Activated naive CD4-positive, alpha-beta T cell treated with anti-CD3 and anti-CD28 coated beads for 36 hours (primary cell): ENCODE measurements at regions of chr2 and their contacts with region 1.

Region 1: DNA sequence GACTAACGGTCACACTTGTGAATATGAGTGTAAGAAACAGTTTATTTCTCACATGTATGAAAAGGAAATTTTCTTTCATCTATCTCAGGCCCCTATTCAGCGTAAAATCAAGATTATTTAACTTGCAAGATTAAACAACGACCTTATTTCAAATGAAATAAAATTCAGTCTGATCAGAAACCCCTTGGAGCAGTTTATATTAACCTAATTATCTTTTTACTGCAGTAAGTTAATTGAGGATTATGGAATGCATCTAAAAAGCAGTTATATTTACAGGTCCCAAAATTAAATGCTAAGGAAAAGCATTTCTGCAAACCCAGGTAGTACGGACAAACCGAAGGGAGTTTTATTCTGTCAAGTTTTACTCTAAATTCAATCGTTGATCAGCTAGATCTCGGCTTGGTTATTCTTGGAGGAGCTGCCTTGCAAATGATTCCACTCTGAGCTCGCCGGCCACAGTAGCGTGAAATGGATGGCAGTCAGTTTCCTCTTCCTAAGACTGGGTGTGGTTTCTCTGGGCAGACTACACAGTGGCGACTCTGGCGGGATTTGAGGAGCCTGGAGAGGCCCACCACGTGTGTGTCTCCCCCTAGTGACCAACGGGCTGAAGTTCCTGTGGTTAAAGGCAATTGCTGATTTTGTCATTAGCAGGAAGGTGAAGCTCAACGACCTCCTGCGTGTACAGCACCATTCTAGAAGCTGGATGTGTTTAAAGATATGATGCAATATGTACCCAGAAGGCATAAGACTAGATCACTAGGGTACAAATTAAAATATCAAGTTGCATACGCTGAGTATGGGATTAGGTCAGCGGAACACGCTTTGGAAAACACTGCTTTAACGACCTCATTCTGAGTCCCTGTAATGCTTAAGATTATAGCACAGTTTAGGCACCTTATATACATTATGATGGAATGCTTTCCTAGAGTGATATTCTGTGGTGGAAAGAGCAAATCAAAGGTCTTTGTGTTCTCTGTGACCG is 36.4 kb downstream of the PRKRA start:
- DNase-seq: peak; percentile 93
- H3K4me3 Mint-ChIP-seq: peak overlapping the region; percentile 79
- H3K27ac Mint-ChIP-seq: peak overlapping the region; percentile 90
- H3K4me1 Mint-ChIP-seq: peaks cover 12% of the 10 kb centered on the region
- H3K27me3 Mint-ChIP-seq: no peaks in the 10 kb centered on the region

Region 2: DNA sequence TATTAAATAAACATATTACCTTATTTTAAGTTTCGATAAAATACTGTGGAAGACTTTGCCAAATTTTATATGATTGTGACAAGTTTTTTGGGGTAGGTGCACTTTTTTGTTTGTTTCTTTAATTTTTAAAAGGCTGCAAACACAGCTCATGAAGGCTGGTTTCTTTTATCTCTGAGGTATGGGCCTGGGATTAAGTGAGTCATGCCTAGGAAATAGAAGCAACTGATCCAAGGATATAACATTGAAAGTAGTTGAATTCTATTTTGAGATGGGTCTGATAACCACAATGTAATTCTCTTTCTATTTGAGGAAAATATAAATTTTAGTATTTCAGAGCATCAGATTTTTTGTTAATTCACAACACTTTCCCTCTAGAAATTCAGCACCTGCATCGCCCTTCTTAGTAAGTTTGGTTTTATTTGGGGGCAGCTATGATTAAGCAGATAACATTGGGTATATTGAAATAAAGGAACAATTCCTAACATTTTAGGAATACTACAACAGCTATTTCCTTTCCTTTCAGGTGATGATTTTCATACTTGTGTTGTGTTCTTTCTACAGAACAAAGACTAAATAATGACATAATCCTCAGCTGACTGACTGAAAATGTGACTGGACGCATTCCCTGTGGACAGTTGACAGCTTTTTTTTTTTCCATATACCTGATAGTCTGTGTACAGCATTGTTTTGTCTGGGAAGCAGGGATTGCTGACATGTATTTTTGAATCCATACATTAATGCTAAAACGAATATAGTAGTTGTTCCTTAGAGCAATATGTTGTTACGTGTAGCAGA is 285.5 kb before region 1 on chr2:
- CTCF ChIA-PET with region 1: interaction called, 10 read pairs
- intact Hi-C with region 1: loop called (anchors 1 kb)
- DNase-seq: no peak
- H3K4me3 Mint-ChIP-seq: no peak overlapping the region
- H3K27ac Mint-ChIP-seq: no peak overlapping the region
- H3K4me1 Mint-ChIP-seq: no peaks in the 10 kb centered on the region
- H3K27me3 Mint-ChIP-seq: no peaks in the 10 kb centered on the region

Region 3: GRCh38 chr2:178188466-178188865 is 226.1 kb before region 1 on chr2:
- CTCF ChIA-PET with region 1: no interaction called
- intact Hi-C with region 1: no loop called
- DNase-seq: no peak
- H3K4me3 Mint-ChIP-seq: no peak overlapping the region
- H3K27ac Mint-ChIP-seq: no peak overlapping the region
- H3K4me1 Mint-ChIP-seq: no peaks in the 10 kb centered on the region
- H3K27me3 Mint-ChIP-seq: peaks cover 22% of the 10 kb centered on the region

Region 4: DNA sequence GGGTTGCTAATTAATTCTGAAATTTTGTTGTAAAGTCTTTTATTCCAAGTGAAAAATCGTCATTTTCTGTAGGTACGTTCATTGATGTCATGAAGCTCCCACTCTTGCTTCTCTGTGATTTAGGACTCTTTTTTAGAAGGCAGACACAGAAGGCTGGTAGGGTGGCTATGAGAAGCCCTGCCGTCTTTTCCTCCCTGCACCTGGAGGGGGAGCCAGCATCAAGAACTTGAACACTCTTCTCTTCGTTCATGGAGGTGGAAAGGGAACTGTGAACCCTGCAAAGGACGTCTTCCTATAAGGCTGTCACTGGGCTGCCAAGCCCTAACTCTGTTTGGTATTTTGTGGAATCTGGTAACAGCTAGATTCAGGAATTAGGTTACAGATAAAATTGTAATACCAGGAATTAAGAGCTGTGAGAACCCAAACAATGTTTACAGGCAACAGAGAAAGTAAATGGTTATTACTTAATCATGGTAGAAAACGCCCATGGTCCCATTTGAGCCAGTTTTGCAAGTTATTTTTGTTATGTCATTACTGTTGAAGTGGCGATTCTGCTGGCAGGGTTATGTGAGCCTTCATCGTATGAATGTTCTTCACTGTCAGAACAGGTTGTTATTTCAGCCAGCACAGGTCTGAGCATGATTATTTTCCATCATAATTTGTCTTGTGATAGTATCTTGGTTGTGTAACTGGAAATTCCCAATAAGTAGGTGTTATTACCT is 108.0 kb before region 1 on chr2:
- CTCF ChIA-PET with region 1: no interaction called
- intact Hi-C with region 1: loop called (anchors 1 kb)
- DNase-seq: peak; percentile 62
- H3K4me3 Mint-ChIP-seq: no peak overlapping the region
- H3K27ac Mint-ChIP-seq: no peak overlapping the region
- H3K4me1 Mint-ChIP-seq: peaks cover 2% of the 10 kb centered on the region
- H3K27me3 Mint-ChIP-seq: peaks cover 12% of the 10 kb centered on the region

Region 5: DNA sequence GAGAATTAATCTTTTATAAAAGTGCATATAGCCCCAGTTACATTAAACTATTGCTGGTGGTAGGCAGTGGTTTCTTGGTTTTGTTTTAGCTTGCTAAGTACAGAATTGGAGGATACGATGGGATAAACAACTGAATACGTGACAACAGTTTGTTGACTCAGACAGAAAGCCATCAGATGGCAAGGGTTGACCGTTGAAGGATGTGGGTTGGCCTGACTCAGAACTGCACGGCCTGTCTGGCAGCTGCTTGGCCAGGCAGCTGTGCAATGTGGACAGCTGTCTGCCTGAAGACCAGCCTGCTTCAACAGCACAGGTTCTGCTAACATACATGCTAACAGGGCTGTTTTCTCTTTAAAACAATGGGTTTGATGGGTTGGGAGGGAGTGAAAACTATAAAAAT is 10.2 kb before region 1 on chr2:
- CTCF ChIA-PET with region 1: interaction called, 59 read pairs
- intact Hi-C with region 1: no loop called
- DNase-seq: no peak
- H3K4me3 Mint-ChIP-seq: no peak overlapping the region
- H3K27ac Mint-ChIP-seq: no peak overlapping the region
- H3K4me1 Mint-ChIP-seq: peaks cover 2% of the 10 kb centered on the region
- H3K27me3 Mint-ChIP-seq: no peaks in the 10 kb centered on the region

Region 6: DNA sequence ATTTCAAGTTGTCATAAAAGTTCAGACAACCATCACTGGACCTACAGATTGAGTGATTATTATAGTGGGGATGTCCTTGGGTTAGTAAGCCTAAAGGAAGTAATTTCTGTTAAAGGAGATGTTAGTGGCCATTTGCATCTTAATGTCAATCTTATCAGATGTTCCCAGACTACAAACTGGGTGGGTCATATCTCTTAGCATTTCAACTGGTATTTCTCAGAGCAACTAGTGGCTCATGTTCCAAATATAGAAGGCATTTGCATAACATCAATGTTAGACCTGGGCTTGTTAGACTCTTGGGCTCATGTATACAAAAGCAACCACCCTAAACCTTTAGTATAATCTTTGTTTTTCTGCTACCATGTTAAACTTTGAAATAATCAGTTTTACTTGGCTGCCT is 83.6 kb after region 1 on chr2:
- CTCF ChIA-PET with region 1: no interaction called
- intact Hi-C with region 1: no loop called
- DNase-seq: no peak
- H3K4me3 Mint-ChIP-seq: no peak overlapping the region
- H3K27ac Mint-ChIP-seq: no peak overlapping the region
- H3K4me1 Mint-ChIP-seq: no peaks in the 10 kb centered on the region
- H3K27me3 Mint-ChIP-seq: no peaks in the 10 kb centered on the region

Region 7: DNA sequence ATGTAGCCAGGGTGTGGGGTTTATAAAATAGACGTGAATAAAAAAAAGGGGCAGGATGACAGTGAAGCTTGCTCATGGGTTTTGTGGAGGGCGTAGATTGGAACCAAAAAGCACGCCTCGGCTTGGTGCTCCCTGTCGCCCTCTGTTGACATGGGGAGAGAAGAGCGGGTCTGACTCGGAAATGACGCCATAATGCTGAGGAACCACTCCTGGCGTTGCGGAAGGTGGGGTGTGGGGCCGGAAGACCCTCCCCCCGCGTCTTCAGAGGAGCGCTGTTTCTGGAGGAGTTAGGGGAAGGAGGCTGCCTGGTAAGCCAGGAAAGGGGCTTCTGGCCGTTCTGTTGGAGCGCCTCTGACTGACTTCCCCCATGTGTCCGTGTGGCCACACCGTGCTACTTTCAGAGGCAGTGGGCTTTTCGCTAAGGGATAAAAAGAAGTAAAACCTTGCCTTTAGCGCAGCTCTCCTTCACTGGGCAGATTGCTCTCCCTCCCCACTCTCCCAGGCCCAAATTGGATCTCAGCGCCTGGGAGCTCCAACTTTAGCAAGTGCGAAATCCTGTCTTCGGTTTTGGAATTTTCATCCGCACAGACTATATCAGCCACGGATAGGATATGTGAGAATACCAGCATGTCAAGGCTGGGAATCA is 108.5 kb after region 1 on chr2:
- CTCF ChIA-PET with region 1: interaction called, 6 read pairs
- intact Hi-C with region 1: loop called (anchors 1 kb)
- DNase-seq: peak; percentile 92
- H3K4me3 Mint-ChIP-seq: peak overlapping the region; percentile 82
- H3K27ac Mint-ChIP-seq: peak overlapping the region; percentile 87
- H3K4me1 Mint-ChIP-seq: peaks cover 48% of the 10 kb centered on the region
- H3K27me3 Mint-ChIP-seq: no peaks in the 10 kb centered on the region